SK-N-SH (cell line): ENCODE measurements at regions of chrX and their contacts with region 1.

Region 1: GRCh38 chrX:137051978-137052642 is 18.3 kb upstream of the GPR101 start:
- DNase-seq: peak; percentile 88
- H3K4me3 ChIP-seq: peak overlapping the region; percentile 47 to 60
- H3K27ac ChIP-seq: no peak overlapping the region
- H3K4me1 ChIP-seq: peaks cover 0 to 5% of the 10 kb centered on the region in 2 experiments; a peak in 1 of 4 replicates
- H3K27me3 ChIP-seq: peaks cover 32% of the 10 kb centered on the region
- CTCF ChIP-seq: peak; percentile 88
- EP300 ChIP-seq: no peak
- RAD21 ChIP-seq: peak; percentile 65

Region 2: GRCh38 chrX:136933611-136934145 is 118.4 kb before region 1 on chrX:
- CTCF ChIA-PET with region 1: no interaction called
- POLR2A ChIA-PET with region 1: no interaction called
- DNase-seq: no peak
- H3K4me3 ChIP-seq: no peak overlapping the region
- H3K27ac ChIP-seq: no peak overlapping the region
- H3K4me1 ChIP-seq: no peaks in the 10 kb centered on the region
- H3K27me3 ChIP-seq: no peaks in the 10 kb centered on the region
- CTCF ChIP-seq: no peak
- EP300 ChIP-seq: no peak
- RAD21 ChIP-seq: no peak

Region 3: GRCh38 chrX:136953867-136954787 is 98.0 kb before region 1 on chrX:
- CTCF ChIA-PET with region 1: interaction called, 13 read pairs
- POLR2A ChIA-PET with region 1: no interaction called
- DNase-seq: peak; percentile 66
- H3K4me3 ChIP-seq: no peak overlapping the region; a peak in 1 of 4 replicates
- H3K27ac ChIP-seq: no peak overlapping the region
- H3K4me1 ChIP-seq: no peaks in the 10 kb centered on the region
- H3K27me3 ChIP-seq: no peaks in the 10 kb centered on the region; the same call in 1 of the 2 replicates
- CTCF ChIP-seq: peak; percentile 73
- EP300 ChIP-seq: no peak
- RAD21 ChIP-seq: peak; percentile 55

Region 4: GRCh38 chrX:137025930-137026329 is 26.2 kb before region 1 on chrX:
- CTCF ChIA-PET with region 1: interaction called, 14 read pairs
- POLR2A ChIA-PET with region 1: no interaction called
- DNase-seq: no peak
- H3K4me3 ChIP-seq: no peak overlapping the region
- H3K27ac ChIP-seq: no peak overlapping the region
- H3K4me1 ChIP-seq: no peaks in the 10 kb centered on the region; a peak in 1 of 4 replicates
- H3K27me3 ChIP-seq: peaks cover 29% of the 10 kb centered on the region
- CTCF ChIP-seq: no peak
- EP300 ChIP-seq: no peak
- RAD21 ChIP-seq: no peak

Region 5: GRCh38 chrX:137031517-137032340 is 20.4 kb before region 1 on chrX:
- CTCF ChIA-PET with region 1: interaction called, 14 read pairs
- POLR2A ChIA-PET with region 1: no interaction called
- DNase-seq: peak; percentile 72
- H3K4me3 ChIP-seq: peak overlapping the region; percentile 37 to 41
- H3K27ac ChIP-seq: no peak overlapping the region
- H3K4me1 ChIP-seq: peaks cover 0 to 9% of the 10 kb centered on the region in 2 experiments; a peak in 1 of 4 replicates
- H3K27me3 ChIP-seq: peaks cover 68% of the 10 kb centered on the region
- CTCF ChIP-seq: no peak
- EP300 ChIP-seq: no peak
- RAD21 ChIP-seq: no peak

Region 6: DNA sequence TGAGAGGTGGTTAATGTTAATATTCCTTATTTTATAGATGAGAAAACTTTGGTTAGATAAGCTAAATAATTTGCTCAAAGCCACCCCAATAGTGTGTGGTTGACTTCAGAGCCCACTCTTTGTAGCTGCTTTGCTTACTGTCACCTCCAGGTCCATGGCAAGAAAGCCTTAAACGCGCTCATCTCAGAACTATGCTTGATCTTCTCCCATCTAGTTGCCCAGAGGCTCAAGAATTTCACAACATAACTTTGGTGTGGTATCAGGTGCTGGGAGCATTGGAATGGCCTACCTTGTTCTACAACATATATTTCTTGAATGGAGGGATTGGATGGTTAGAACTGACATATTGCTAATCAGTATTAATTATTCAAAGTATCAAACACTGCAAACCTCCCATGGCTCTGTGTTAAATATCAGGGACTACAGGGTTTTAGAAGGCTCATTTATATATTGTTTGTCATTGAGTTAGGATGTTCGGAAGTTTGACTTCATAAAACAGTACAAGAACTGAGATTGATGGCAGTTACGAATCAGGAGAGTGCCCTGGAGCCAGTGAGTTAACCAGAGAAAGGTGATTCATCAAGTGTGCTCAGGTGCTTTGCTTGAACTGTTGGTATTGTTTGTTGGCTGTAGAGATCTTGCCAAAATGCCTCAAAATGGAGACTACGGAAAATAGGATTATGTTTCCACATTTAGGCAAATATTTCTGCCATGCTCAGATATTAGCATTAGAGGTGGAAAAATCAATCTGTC is 11.0 kb before region 1 on chrX:
- CTCF ChIA-PET with region 1: interaction called, 14 read pairs
- POLR2A ChIA-PET with region 1: no interaction called
- DNase-seq: no peak
- H3K4me3 ChIP-seq: no peak overlapping the region
- H3K27ac ChIP-seq: no peak overlapping the region
- H3K4me1 ChIP-seq: no peaks in the 10 kb centered on the region
- H3K27me3 ChIP-seq: peaks cover 16% of the 10 kb centered on the region
- CTCF ChIP-seq: no peak
- EP300 ChIP-seq: no peak
- RAD21 ChIP-seq: no peak

Region 7: DNA sequence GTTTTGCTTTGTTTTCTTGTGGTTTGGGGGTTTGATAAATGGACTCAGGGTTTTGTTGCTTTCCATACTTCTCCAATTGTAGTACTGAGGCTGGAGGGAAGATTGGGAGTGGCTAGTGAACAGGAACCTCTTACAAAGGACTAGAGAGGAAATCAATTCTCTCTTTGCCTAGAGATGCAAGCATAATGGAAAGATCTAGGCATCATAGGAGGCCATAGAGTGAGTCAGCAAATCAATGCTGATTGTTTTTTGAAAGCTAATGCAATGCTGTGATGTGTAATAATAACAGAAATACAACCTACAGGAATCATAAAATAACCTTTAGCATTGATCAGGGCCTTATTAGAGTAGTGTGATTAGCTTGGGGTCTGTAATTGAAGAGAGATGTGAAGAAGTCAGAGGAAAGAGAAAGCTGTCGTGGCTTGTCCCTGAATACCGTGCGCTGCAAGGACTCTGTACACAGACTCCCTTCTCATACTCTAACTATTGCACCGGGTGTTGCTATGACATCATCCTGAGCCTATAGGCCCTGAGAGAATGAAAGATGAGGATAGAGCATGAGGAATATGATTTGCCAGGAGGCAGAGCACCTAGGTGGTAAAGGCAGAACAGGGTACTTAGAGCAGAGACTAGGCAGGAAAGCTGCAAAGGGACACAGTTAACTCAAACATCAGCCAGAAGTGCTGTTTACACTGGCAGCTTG is 11.0 kb after region 1 on chrX:
- CTCF ChIA-PET with region 1: interaction called, 18 read pairs
- POLR2A ChIA-PET with region 1: interaction called, 3 read pairs
- DNase-seq: no peak
- H3K4me3 ChIP-seq: no peak overlapping the region
- H3K27ac ChIP-seq: no peak overlapping the region
- H3K4me1 ChIP-seq: no peaks in the 10 kb centered on the region
- H3K27me3 ChIP-seq: no peaks in the 10 kb centered on the region; the same call in 1 of the 2 replicates
- CTCF ChIP-seq: no peak
- EP300 ChIP-seq: no peak
- RAD21 ChIP-seq: no peak